IMR-90 (cell line): ENCODE measurements at regions of chr16 and their contacts with region 1.

Region 1: GRCh38 chr16:30534368-30535105 is at the start of gene ZNF747:
- DNase-seq: peak; percentile 75
- ATAC-seq: peak; percentile 92
- H3K4me3 ChIP-seq: peak within 1 kb of the TSS; percentile 68
- H3K27ac ChIP-seq: peak within 1 kb of the TSS; percentile 78
- H3K4me1 ChIP-seq: peaks cover 8% of the 10 kb centered on the region
- H3K27me3 ChIP-seq: no peaks in the 10 kb centered on the region
- CTCF ChIP-seq: no peak
- POLR2A ChIP-seq: no peak
- RAD21 ChIP-seq: no peak
- total RNA-seq, gene ZNF747: 1.9 and 2.0 TPM in 2 replicates

Region 2: GRCh38 chr16:29694384-29695195 is 839.9 kb before region 1 on chr16:
- CTCF ChIA-PET with region 1: no interaction called
- POLR2A ChIA-PET with region 1: interaction called, 10 read pairs
- dilution Hi-C with region 1: no loop called
- in situ Hi-C with region 1: no loop called
- intact Hi-C with region 1: no loop called
- DNase-seq: no peak
- ATAC-seq: peak; percentile 17
- H3K4me3 ChIP-seq: no peak overlapping the region
- H3K27ac ChIP-seq: no peak overlapping the region
- H3K4me1 ChIP-seq: no peaks in the 10 kb centered on the region
- H3K27me3 ChIP-seq: peaks cover 8% of the 10 kb centered on the region; the same call in 1 of the 2 replicates
- CTCF ChIP-seq: no peak
- POLR2A ChIP-seq: no peak
- RAD21 ChIP-seq: no peak

Region 3: GRCh38 chr16:30571695-30572600 is 37.4 kb after region 1 on chr16 and contains the start of gene ZNF688:
- CTCF ChIA-PET with region 1: no interaction called
- POLR2A ChIA-PET with region 1: no interaction called
- dilution Hi-C with region 1: no loop called
- in situ Hi-C with region 1: loop called (anchors 5 kb)
- intact Hi-C with region 1: no loop called
- DNase-seq: peak; percentile 96
- ATAC-seq: peak; percentile 90
- H3K4me3 ChIP-seq: peak within 1 kb of the TSS; percentile 57
- H3K27ac ChIP-seq: peak within 1 kb of the TSS; percentile 89
- H3K4me1 ChIP-seq: peaks cover 9% of the 10 kb centered on the region
- H3K27me3 ChIP-seq: no peaks in the 10 kb centered on the region
- CTCF ChIP-seq: no peak
- POLR2A ChIP-seq: no peak
- RAD21 ChIP-seq: no peak
- total RNA-seq, gene ZNF688: 1.7 and 1.8 TPM in 2 replicates

Region 4: GRCh38 chr16:30585400-30586189 is 51.1 kb after region 1 on chr16 and contains the start of gene ZNF785:
- CTCF ChIA-PET with region 1: no interaction called
- POLR2A ChIA-PET with region 1: no interaction called
- dilution Hi-C with region 1: no loop called
- in situ Hi-C with region 1: no loop called
- intact Hi-C with region 1: loop called (anchors 2 kb)
- DNase-seq: peak; percentile 99
- ATAC-seq: peak; percentile 98
- H3K4me3 ChIP-seq: peak within 1 kb of the TSS; percentile 58
- H3K27ac ChIP-seq: peak within 1 kb of the TSS; percentile 82
- H3K4me1 ChIP-seq: peaks cover 3% of the 10 kb centered on the region; the same call in 1 of the 2 replicates
- H3K27me3 ChIP-seq: no peaks in the 10 kb centered on the region
- CTCF ChIP-seq: 0 out of 2 replicates have a peak, but pooled peaks have one; percentile 12
- POLR2A ChIP-seq: no peak; the same call in 1 of the 2 replicates
- RAD21 ChIP-seq: no peak
- total RNA-seq, gene ZNF785: 2.8 and 2.9 TPM in 2 replicates